ENCODE measurements at regions of chr14 and their contacts with region 1.

Region 1: GRCh38 chr14:21557084-21557901 is 22.6 kb downstream of the OR10G3 start:
- DNase-seq: peak; percentile 84
- H3K4me3 Mint-ChIP-seq: peak overlapping the region; percentile 45
- H3K27ac Mint-ChIP-seq: no peak overlapping the region
- H3K4me1 Mint-ChIP-seq: peaks cover 7% of the 10 kb centered on the region
- H3K27me3 Mint-ChIP-seq: no peaks in the 10 kb centered on the region
- CTCF ChIP-seq: peak; percentile 70

Region 2: GRCh38 chr14:20873370-20874177 is 683.7 kb before region 1 on chr14:
- CTCF ChIA-PET with region 1: no interaction called
- POLR2A ChIA-PET with region 1: no interaction called
- intact Hi-C with region 1: no loop called
- DNase-seq: peak; percentile 63
- H3K4me3 Mint-ChIP-seq: no peak overlapping the region
- H3K27ac Mint-ChIP-seq: no peak overlapping the region
- H3K4me1 Mint-ChIP-seq: no peaks in the 10 kb centered on the region
- H3K27me3 Mint-ChIP-seq: peaks cover 79% of the 10 kb centered on the region
- CTCF ChIP-seq: peak; percentile 50

Region 3: DNA sequence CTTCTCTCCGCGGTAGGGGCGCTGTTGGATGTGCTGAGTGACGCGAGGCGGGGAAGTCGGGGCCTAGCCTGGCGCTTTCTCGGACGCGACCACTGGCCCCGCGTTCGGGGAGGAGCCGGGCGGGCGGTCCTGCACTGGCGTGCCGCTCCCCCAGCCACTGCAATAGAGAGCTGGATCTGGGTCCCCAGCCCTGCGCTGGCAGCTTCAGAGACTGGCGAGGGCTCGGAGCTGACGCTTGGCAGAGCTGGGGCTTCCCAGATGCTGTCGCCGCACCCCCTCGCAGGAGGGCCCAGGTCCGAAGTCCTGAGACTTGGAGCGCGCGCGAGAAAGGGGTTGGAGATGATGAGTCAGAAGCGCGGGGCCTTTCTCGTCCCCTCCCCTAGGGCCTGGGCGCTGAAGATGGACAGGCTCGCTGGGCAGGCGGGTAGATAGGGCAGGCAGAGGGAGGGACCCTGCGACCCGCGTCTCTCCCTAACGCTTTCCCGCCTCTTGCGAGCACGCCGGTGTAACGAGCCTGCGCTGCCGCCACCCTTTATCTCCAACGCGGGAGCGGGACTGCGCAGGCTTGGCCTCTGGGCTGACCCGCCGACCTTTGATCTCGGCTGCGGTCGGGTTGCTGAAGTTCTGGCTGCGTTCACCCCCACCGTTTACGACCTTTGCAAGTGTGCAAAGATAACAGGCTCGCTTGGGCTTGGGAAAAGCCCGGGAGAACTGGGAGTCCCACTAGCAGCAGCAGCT is 453.4 kb before region 1 on chr14:
- CTCF ChIA-PET with region 1: no interaction called
- POLR2A ChIA-PET with region 1: no interaction called
- intact Hi-C with region 1: no loop called
- DNase-seq: peak; percentile 98
- H3K4me3 Mint-ChIP-seq: peak overlapping the region; percentile 84
- H3K27ac Mint-ChIP-seq: peak overlapping the region; percentile 67
- H3K4me1 Mint-ChIP-seq: peaks cover 52% of the 10 kb centered on the region
- H3K27me3 Mint-ChIP-seq: no peaks in the 10 kb centered on the region
- CTCF ChIP-seq: peak; percentile 58

Region 4: DNA sequence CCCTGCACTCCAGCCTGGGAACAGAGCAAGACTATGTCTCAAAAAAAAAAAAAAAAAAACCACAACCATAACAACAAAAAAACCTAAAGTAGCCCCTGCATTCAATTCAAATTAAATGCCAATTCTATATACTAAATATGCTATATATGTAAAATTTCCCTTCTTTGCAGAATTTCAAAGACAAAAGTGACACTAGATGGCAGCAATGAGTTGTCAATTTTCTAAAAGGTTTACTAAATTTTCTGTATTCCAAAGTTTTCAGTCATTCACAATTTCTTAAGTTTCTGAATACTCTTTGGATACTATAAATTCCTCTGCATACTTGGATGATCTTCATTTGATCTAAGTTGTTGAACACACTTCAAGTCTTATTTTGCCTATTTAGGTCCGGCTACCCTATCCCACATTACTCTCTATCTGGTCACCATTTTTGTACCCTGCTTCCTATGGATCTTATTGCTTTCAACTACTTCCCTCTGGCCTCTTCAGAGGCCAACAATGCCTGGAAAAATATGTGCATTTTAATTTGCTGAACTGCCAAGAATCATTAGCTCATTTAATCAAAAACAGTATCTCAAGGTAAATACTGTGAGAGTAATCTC is 316.0 kb before region 1 on chr14:
- CTCF ChIA-PET with region 1: interaction called, 3 read pairs
- POLR2A ChIA-PET with region 1: no interaction called
- intact Hi-C with region 1: loop called (anchors 10 kb)
- DNase-seq: peak; percentile 34
- H3K4me3 Mint-ChIP-seq: no peak overlapping the region
- H3K27ac Mint-ChIP-seq: peak overlapping the region; percentile 27
- H3K4me1 Mint-ChIP-seq: peaks cover 14% of the 10 kb centered on the region
- H3K27me3 Mint-ChIP-seq: no peaks in the 10 kb centered on the region
- CTCF ChIP-seq: peak; percentile 36

Region 5: DNA sequence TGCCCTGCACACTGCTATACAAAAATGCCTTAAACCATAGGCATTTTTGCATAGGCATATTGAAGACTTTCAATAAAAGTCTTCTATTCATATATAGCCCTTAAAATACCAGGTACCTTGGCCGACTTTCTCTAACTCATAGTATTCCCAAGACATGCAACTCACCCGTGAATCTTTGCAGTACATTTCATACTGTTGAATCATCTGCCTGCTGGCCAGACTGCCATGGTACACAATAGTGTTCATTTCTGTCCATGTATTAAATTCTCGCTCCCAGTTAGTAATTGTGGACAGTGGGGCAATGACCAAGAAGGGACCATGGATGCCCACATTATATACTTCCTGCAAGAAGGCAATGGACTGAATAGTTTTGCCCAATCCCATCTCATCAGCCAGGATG is 149.1 kb before region 1 on chr14:
- CTCF ChIA-PET with region 1: no interaction called
- POLR2A ChIA-PET with region 1: no interaction called
- intact Hi-C with region 1: loop called (anchors 10 kb)
- DNase-seq: peak; percentile 62
- H3K4me3 Mint-ChIP-seq: no peak overlapping the region
- H3K27ac Mint-ChIP-seq: no peak overlapping the region
- H3K4me1 Mint-ChIP-seq: peaks cover 12% of the 10 kb centered on the region
- H3K27me3 Mint-ChIP-seq: no peaks in the 10 kb centered on the region
- CTCF ChIP-seq: no peak

Region 6: DNA sequence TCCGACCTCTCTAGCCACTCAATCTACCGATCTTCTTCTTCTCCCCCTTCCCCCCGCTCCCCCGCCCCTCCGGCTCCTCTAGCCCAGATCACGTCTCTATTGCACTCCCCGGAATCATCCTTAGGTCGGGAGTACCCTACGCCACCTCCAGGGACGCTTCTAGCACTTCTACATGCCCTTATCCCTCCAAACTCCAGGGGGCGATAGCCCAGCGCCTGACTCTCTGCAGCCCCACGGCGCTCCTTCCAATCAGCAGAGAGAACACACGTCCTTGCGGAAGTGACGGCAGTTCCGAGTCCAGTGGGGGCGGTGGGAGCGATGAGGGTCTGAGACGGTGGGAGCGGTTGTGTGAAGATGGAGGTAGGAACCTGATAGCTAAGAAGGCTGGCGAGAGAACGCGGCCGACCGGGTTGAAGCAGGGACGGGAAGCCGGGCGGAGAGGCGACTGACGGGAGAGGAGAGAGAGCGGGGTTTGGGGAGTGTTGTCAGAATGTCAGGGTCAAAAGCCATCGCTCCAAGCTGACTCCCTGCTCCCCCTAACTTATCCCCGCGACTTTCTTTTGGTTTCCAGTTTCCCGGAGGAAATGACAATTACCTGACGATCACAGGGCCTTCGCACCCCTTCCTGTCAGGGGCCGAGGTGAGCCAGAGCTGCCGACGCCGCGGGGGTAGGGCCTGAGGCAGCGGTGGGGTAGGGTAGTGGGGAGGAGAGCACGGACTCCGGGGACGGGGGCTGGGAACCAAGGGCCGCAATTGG is 80.2 kb before region 1 on chr14 and contains the starts of genes RAB2B and TOX4:
- CTCF ChIA-PET with region 1: interaction called, 10 read pairs
- POLR2A ChIA-PET with region 1: interaction called, 4 read pairs
- intact Hi-C with region 1: loop called (anchors 5 kb)
- DNase-seq: peak; percentile 99
- H3K4me3 Mint-ChIP-seq: peak within 1 kb of the TSS; percentile 87
- H3K27ac Mint-ChIP-seq: peak within 1 kb of the TSS; percentile 98
- H3K4me1 Mint-ChIP-seq: no peaks in the 10 kb centered on the region
- H3K27me3 Mint-ChIP-seq: no peaks in the 10 kb centered on the region
- CTCF ChIP-seq: peak; percentile 90
- total RNA-seq, gene RAB2B: 22.8 and 23.3 TPM in 2 replicates
- total RNA-seq, gene TOX4: 84.1 and 105 TPM in 2 replicates

Region 7: GRCh38 chr14:21510735-21511657 is 46.3 kb before region 1 on chr14 and contains the start of gene METTL3:
- CTCF ChIA-PET with region 1: interaction called, 27 read pairs
- POLR2A ChIA-PET with region 1: interaction called, 16 read pairs
- intact Hi-C with region 1: loop called (anchors 5 kb)
- DNase-seq: peak; percentile 99
- H3K4me3 Mint-ChIP-seq: peak within 1 kb of the TSS; percentile 96
- H3K27ac Mint-ChIP-seq: peak within 1 kb of the TSS; percentile 95
- H3K4me1 Mint-ChIP-seq: peaks cover 13% of the 10 kb centered on the region
- H3K27me3 Mint-ChIP-seq: no peaks in the 10 kb centered on the region
- CTCF ChIP-seq: no peak
- total RNA-seq, gene METTL3: 36.4 and 46.7 TPM in 2 replicates

Region 8: DNA sequence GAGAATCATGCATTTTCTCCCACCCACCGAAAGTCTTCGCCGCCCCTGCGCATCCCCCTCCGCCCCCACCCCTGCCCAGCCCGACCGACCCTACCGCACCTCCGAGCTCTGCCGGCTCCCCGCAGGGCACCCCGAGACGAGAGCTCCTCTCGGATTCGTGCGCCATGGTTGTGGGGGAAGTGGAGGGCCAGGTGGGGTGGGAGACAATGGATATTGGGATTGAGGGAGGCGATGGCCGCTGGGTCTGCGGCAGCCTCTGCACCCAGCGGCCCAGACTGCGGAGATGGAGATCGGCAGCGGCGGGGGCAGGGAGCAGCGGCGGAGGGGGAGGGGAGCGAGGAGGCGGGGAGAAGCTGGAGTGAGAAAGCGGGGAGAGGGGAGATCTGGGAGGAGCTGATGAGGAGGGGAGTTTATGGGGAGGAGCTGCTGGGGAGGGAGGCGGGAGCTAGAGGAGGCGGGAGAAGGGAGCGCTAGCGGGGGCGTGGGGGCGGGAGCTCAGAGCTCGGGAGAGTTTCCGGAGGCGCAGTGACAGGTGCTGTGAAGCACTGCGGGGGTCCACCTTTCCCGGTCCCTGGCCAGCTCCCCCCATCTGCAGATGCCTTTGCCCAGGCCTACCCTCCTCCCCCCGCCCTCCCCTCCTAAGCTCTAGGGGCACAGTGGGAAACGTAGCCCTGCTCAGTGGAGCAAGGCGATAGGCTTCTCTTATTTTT is 31.2 kb before region 1 on chr14 and contains the start of gene SALL2:
- CTCF ChIA-PET with region 1: interaction called, 11 read pairs
- POLR2A ChIA-PET with region 1: no interaction called
- intact Hi-C with region 1: no loop called
- DNase-seq: no peak
- H3K4me3 Mint-ChIP-seq: peak within 1 kb of the TSS; percentile 33
- H3K27ac Mint-ChIP-seq: no peak within 1 kb of the TSS
- H3K4me1 Mint-ChIP-seq: no peaks in the 10 kb centered on the region
- H3K27me3 Mint-ChIP-seq: peaks cover 22% of the 10 kb centered on the region
- CTCF ChIP-seq: no peak
- total RNA-seq, gene SALL2: 0.05 and 0.09 TPM in 2 replicates

Region 9: DNA sequence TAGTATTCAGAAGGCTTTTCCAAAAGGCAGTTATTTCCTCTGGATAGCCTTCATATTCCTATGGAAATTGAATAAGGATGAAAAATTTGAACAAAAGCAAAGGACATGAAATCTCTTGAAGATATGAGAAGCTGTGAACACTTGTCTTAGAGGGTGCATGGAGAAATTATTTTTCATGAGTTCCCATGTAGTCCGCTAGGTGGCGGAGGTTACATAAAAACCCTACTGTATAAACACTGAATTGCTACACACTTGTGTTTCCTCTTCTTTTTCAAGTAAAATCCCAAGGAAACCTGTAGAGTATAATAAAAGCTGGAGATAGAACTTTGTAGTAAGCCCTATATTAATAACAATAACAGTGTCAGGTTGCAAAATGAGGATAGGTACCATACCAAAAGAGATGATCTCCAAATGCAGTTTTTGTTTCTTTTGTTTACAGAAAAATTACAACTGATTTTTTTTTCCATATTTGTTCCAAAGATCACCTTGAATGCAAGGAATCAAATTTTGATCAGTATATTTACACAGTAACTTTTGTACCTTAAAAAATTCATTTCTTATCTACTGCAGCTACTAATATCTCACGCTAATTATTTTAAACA is 154.2 kb after region 1 on chr14:
- CTCF ChIA-PET with region 1: no interaction called
- POLR2A ChIA-PET with region 1: no interaction called
- intact Hi-C with region 1: no loop called
- DNase-seq: peak; percentile 57
- H3K4me3 Mint-ChIP-seq: no peak overlapping the region
- H3K27ac Mint-ChIP-seq: no peak overlapping the region
- H3K4me1 Mint-ChIP-seq: no peaks in the 10 kb centered on the region
- H3K27me3 Mint-ChIP-seq: peaks cover 73% of the 10 kb centered on the region
- CTCF ChIP-seq: peak; percentile 61

Measured in MCF 10A (cell line).